Gastrocnemius medialis (tissue), 4 donors: ENCODE measurements at regions of chr16 and their contacts with region 1.

Region 1: DNA sequence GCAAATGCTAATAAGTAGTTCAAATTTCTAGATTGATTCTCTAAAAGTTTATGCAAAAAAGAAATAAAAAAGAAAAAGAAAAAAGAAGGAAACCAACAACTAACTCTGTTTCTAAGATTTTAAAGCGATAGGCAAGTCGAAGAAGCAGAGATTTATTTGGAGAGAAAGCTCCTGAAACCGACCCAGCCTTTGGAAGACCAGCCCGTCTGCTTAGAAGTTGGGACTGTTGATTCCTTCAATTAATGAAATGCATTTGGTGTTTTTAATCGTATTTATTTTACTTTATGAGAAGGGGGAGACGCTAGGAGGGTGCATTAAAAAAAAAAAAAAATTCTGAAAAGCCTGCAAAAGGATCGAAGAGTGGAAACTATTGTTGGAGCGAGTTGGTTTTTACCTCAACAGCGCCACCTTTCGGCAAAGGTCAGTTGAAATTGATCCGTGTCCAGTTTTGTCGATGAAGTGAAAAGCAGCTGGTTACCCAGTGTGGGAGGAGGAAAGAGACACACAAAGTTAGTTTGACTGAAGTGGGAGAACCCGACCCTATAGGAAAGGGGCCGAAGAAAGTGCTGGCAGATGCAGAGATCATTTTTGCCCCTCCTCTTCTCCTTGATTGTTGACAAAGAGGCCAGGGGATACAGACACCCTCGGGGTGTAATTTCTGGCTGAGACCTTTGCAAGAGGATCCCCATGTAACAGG is 1.5 kb upstream of the MAF start:
- DNase-seq: peak; percentile 68 to 73
- ATAC-seq: peak; percentile 22 to 23
- H3K4me3 ChIP-seq: peak overlapping the region; percentile 74 to 89 (median 86)
- H3K27ac ChIP-seq: peak overlapping the region; percentile 92 to 98 (median 98)
- H3K4me1 ChIP-seq: peaks cover 18 to 19% of the 10 kb centered on the region in 2 donors
- H3K27me3 ChIP-seq: no peaks in the 10 kb centered on the region
- CTCF ChIP-seq: peak; percentile 69 to 81 (median 79)
- POLR2A ChIP-seq: no peak

Region 2: DNA sequence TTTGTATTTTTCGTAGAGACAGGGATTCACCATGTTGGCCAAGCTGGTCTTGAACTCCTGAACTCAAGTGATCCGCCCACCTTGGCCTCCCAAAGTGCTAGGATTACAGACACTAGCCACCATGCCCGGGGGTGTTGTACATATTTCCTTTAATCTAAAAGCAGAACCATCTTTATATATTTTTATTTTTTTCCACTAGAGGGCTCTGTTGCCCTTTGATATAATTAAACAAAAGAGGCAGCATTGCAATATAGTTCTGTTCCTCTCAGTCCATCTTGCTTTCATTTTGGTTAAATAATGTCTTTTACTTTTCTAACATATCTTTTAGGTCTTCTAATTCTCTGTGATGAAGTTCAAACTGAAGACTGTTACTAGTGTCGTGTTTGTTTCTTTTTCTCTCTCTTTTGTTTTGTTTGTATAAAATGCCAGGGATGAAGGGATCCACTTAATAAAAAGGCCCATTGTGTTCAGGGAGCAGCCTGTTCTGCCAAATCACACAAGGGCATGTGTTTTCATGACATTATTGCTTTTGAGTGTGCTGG is 1479.2 kb before region 1 on chr16:
- in situ Hi-C with region 1: loop called in 2 of 4 experiments (anchors 10 to 25 kb)
- intact Hi-C with region 1: loop called (anchors 2 kb)
- DNase-seq: no peak
- ATAC-seq: peak; percentile 69 to 80
- H3K4me3 ChIP-seq: no peak overlapping the region
- H3K27ac ChIP-seq: no peak overlapping the region
- H3K4me1 ChIP-seq: peaks cover 14 to 16% of the 10 kb centered on the region in 2 donors
- H3K27me3 ChIP-seq: no peaks in the 10 kb centered on the region
- CTCF ChIP-seq: peak in 4 of 5 experiments; percentile 43 to 52 (median 50)
- POLR2A ChIP-seq: no peak

Region 3: GRCh38 chr16:78778101-78779004 is 823.7 kb before region 1 on chr16:
- in situ Hi-C with region 1: no loop called
- intact Hi-C with region 1: loop called (anchors 5 kb)
- DNase-seq: peak; percentile 34 to 70
- ATAC-seq: peak; percentile 95 to 98
- H3K4me3 ChIP-seq: peak overlapping the region in 1 of 4 donors; percentile 7
- H3K27ac ChIP-seq: peak overlapping the region; percentile 37 to 81 (median 42)
- H3K4me1 ChIP-seq: peaks cover 7% of the 10 kb centered on the region in 2 donors
- H3K27me3 ChIP-seq: no peaks in the 10 kb centered on the region
- CTCF ChIP-seq: no peak
- POLR2A ChIP-seq: no peak

Region 4: GRCh38 chr16:78925083-78925767 is 676.9 kb before region 1 on chr16:
- in situ Hi-C with region 1: loop called in 3 of 4 experiments (anchors 10 to 25 kb)
- intact Hi-C with region 1: no loop called
- DNase-seq: peak in 1 of 2 donors; percentile 30
- ATAC-seq: peak; percentile 54 to 82
- H3K4me3 ChIP-seq: no peak overlapping the region
- H3K27ac ChIP-seq: no peak overlapping the region
- H3K4me1 ChIP-seq: no peaks in the 10 kb centered on the region
- H3K27me3 ChIP-seq: no peaks in the 10 kb centered on the region
- CTCF ChIP-seq: peak; percentile 24 to 62 (median 41)
- POLR2A ChIP-seq: no peak

Region 5: DNA sequence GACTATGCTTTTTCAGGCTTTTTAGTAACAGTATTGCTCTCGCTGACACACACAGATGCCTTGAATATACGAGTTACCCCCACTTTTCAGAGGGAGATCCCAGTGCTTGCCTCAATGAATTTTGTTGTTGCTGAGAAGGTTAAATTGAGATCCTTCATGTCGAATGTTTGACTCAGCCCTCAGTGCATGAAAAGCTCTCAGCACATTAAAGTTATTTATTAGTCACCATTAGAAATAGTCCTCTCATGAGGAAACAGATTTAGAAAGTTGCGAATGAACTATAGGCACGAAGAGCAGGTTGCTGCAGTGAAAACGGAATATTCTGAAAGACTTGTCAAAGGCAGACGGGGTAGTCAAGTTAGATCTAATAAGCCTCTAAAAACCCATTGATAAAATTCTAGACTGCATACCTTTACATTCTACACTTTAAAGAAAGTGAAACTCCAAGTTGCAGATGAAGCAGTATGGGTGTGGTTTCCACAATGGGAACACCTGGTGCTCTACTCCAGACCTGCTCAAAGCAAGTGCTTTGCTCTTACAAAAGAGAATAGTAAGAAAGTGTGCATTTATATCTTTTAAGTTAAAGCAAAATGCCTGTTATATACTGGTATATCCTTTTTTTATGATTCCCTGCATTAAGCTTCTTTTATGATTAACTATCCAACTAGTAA is 239.6 kb before region 1 on chr16:
- in situ Hi-C with region 1: loop called in 1 of 4 experiments (anchors 10 kb)
- intact Hi-C with region 1: loop called (anchors 2 kb)
- DNase-seq: no peak
- ATAC-seq: peak; percentile 61 to 78
- H3K4me3 ChIP-seq: peak overlapping the region in 3 of 4 donors; percentile 19 to 28 (median 26)
- H3K27ac ChIP-seq: peak overlapping the region; percentile 75 to 81 (median 80)
- H3K4me1 ChIP-seq: peaks cover 26 to 35% of the 10 kb centered on the region in 2 donors
- H3K27me3 ChIP-seq: no peaks in the 10 kb centered on the region
- CTCF ChIP-seq: no peak
- POLR2A ChIP-seq: no peak

Region 6: GRCh38 chr16:79451196-79451816 is 150.8 kb before region 1 on chr16:
- in situ Hi-C with region 1: no loop called
- intact Hi-C with region 1: no loop called
- DNase-seq: no peak
- ATAC-seq: no peak
- H3K4me3 ChIP-seq: no peak overlapping the region
- H3K27ac ChIP-seq: no peak overlapping the region
- H3K4me1 ChIP-seq: no peaks in the 10 kb centered on the region
- H3K27me3 ChIP-seq: no peaks in the 10 kb centered on the region
- CTCF ChIP-seq: no peak
- POLR2A ChIP-seq: no peak

Region 7: DNA sequence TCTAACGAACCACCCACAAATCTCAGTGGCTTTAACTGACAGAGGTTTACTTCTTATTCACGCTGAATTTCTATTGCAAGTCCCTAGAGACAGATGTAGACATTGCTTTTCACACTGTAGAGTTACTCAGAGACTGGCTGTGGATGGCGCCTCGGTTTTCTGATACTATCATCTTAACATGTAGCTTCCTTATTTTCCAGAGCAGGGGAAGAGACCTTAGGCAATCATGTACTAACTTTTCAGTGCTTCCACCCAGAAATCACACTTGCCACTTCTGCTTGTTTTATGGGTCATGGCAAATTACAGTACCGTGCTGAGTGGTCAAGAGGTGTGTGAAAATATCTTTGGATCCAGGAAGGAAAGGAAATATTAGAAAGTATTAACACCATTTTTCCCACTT is 66.9 kb before region 1 on chr16:
- in situ Hi-C with region 1: loop called in 1 of 4 experiments (anchors 10 kb)
- intact Hi-C with region 1: loop called (anchors 5 kb)
- DNase-seq: no peak
- ATAC-seq: no peak
- H3K4me3 ChIP-seq: no peak overlapping the region
- H3K27ac ChIP-seq: peak overlapping the region in 2 of 4 donors; percentile 84 to 86
- H3K4me1 ChIP-seq: peaks cover 17 to 19% of the 10 kb centered on the region in 2 donors
- H3K27me3 ChIP-seq: no peaks in the 10 kb centered on the region
- CTCF ChIP-seq: no peak
- POLR2A ChIP-seq: no peak